Caco-2 (cell line): ENCODE measurements at regions of chr20 and their contacts with region 1.

Region 1: DNA sequence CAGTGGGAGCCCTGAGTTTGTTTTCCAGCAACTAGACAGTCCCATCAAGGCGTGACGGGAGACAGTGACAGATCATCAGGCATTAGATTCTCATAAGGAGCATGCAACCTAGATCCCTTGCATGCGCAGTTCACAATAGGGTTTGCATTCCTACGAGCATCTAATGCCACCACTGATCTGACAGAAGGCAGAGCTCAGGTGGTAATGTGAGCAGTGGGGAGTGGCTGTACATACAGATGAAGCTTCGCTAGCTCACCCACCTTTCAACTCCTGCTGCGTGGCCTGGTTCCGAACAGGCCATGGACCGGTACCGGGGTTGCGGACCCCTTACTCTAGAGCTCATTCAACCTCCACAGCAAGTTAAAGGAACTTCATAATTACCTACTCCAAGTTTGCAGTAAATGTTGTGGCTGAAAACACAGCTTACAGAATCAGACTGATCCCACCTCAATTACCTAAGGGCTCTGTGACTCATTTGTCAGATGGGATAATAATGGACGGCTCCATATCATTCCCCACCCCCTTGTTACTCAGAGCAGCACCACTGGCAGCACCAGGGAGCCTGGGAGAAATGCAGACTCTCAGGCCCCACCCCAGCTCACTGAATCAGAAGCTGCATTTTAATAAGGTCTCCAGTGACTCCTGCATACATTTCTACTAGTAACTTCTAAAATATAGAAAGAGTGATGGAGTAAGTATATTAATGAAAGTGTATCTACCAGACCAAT is 15.7 kb downstream of the PXMP4 start:
- DNase-seq: no peak
- H3K4me3 ChIP-seq: no peak overlapping the region
- H3K4me3 Mint-ChIP-seq: no peak overlapping the region
- H3K27ac Mint-ChIP-seq: no peak overlapping the region
- H3K4me1 ChIP-seq: no peaks in the 10 kb centered on the region
- H3K4me1 Mint-ChIP-seq: no peaks in the 10 kb centered on the region
- H3K27me3 ChIP-seq: no peaks in the 10 kb centered on the region
- H3K27me3 Mint-ChIP-seq: no peaks in the 10 kb centered on the region
- CTCF ChIP-seq: no peak

Region 2: GRCh38 chr20:32072168-32072750 is 1632.1 kb before region 1 on chr20:
- CTCF ChIA-PET with region 1: no interaction called
- POLR2A ChIA-PET with region 1: interaction called, 16 read pairs
- intact Hi-C with region 1: no loop called
- DNase-seq: no peak
- H3K4me3 ChIP-seq: no peak overlapping the region
- H3K4me3 Mint-ChIP-seq: no peak overlapping the region
- H3K27ac Mint-ChIP-seq: no peak overlapping the region
- H3K4me1 ChIP-seq: no peaks in the 10 kb centered on the region
- H3K4me1 Mint-ChIP-seq: no peaks in the 10 kb centered on the region
- H3K27me3 ChIP-seq: no peaks in the 10 kb centered on the region; the same call in 1 of the 2 replicates
- H3K27me3 Mint-ChIP-seq: peaks cover 17% of the 10 kb centered on the region
- CTCF ChIP-seq: no peak